Left cardiac atrium (tissue), 4 donors: ENCODE measurements at regions of chr9 and their contacts with region 1.

Region 1: DNA sequence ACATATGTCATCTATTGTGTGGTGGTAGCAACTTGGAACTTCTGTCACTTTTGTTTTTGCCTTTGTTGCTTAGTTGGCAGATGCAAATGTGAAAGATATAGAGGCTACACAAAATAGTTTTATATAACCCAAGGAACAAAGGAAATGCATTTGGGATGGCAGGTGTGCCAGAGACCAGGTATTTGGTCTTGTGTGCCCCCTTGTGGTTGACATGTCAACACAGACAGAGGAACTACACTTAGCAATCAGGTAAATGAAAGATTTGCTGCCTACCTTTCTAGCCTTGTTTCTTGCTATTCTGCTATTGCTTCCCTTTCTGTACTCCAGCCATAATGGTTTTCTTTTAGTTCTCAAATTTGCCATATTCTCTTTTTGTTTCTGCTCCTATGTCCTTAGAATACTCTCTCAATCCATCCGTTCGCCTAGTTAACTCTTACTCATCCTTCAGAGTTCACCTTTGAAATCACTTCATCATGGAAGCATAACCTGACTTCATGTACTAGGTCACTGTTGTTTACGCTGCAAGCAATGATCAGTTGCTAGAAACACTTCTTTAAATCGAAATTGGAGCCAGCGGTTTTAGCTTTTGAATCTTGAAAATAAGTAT is 119.5 kb downstream of the TRPM3 start:
- DNase-seq: no peak
- ATAC-seq: peak in 1 of 2 donors; percentile 42

Region 2: GRCh38 chr9:70639853-70640814 is 361.7 kb before region 1 on chr9:
- intact Hi-C with region 1: loop called in 1 of 2 experiments (anchors 5 kb)
- DNase-seq: no peak
- ATAC-seq: peak; percentile 57 to 59

Region 3: GRCh38 chr9:72065076-72065475 is 1063.2 kb after region 1 on chr9:
- intact Hi-C with region 1: no loop called
- DNase-seq: no peak
- ATAC-seq: no peak